Stomach (tissue), 19 donors: ENCODE measurements at regions of chr10 and their contacts with region 1.

Region 1: DNA sequence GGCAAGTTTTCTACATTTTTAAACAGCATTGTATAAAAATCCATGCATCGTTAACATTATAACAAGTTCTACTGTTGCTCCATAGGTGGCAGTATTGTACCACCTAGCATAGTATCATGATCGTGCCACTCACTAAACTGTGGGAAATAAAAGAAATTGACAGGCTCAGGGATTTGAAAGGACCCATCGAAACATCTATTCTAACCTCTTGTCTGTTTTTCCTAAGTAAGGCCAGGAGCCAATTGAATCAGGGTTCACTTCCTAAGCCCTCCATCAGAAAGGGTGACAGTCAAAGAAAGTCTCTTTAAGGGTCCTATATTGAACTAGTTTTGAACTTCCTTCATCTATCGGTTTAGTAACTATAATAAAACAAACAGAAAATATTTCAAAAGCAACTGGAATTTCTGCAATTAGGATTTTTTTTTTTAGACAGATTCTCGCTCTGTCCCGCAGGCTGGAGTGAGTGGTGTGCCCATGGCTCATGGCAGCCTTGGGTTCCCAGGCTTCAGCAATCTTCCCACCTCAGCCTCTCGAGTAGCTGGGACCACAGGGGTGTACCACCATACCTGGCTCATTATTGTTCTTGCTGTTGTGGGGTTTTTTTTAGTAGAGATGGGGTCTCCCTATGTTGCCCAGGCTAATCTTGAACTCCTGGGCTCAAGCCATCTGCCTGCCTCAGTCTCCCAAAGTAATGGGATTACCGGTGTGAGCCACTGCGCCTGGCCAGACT is 9.4 kb downstream of the HACD1 start:
- DNase-seq: peak in 1 of 2 donors; percentile 79
- H3K4me3 ChIP-seq: no peak overlapping the region
- H3K27ac ChIP-seq: no peak overlapping the region
- H3K4me1 ChIP-seq: peaks cover 0 to 17% (median 6%) of the 10 kb centered on the region in 4 donors
- H3K27me3 ChIP-seq: no peaks in the 10 kb centered on the region
- CTCF ChIP-seq: peak in 5 of 7 experiments; percentile 68 to 87 (median 85)
- EP300 ChIP-seq: no peak
- POLR2A ChIP-seq: no peak

Region 2: DNA sequence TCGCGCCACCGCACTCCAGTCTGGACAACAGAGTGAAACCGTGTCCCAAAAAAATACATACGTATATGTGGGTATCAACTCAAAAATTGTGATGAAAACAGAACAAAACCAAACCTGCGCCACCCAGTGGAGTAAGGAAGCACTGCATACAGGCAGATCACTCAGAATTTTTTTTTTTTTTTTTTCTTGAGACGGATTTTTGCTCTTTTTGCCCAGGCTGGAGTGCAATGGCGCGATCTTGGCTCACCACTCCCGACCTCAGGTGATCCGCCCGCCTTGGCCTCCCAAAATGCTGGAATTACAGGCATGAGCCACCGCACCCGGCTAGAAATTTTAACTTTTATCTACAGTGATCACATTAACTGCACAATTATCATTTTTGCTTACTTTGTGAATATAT is 135.2 kb after region 1 on chr10:
- intact Hi-C with region 1: loop called (anchors 5 kb)
- DNase-seq: peak; percentile 58 to 72
- H3K4me3 ChIP-seq: no peak overlapping the region
- H3K27ac ChIP-seq: no peak overlapping the region
- H3K4me1 ChIP-seq: peaks cover 0 to 16% (median 6%) of the 10 kb centered on the region in 4 donors
- H3K27me3 ChIP-seq: no peaks in the 10 kb centered on the region
- CTCF ChIP-seq: peak in 5 of 7 experiments; percentile 78 to 97 (median 86)
- EP300 ChIP-seq: no peak
- POLR2A ChIP-seq: no peak

Region 3: GRCh38 chr10:17872191-17873091 is 264.7 kb after region 1 on chr10:
- intact Hi-C with region 1: loop called (anchors 10 kb)
- DNase-seq: peak in 1 of 2 donors; percentile 47
- H3K4me3 ChIP-seq: no peak overlapping the region
- H3K27ac ChIP-seq: no peak overlapping the region
- H3K4me1 ChIP-seq: no peaks in the 10 kb centered on the region
- H3K27me3 ChIP-seq: no peaks in the 10 kb centered on the region
- CTCF ChIP-seq: peak in 3 of 7 experiments; percentile 22 to 59 (median 23)
- EP300 ChIP-seq: no peak
- POLR2A ChIP-seq: no peak

Region 4: GRCh38 chr10:17974505-17974904 is 366.7 kb after region 1 on chr10:
- intact Hi-C with region 1: no loop called
- DNase-seq: no peak
- H3K4me3 ChIP-seq: no peak overlapping the region
- H3K27ac ChIP-seq: no peak overlapping the region
- H3K4me1 ChIP-seq: no peaks in the 10 kb centered on the region
- H3K27me3 ChIP-seq: no peaks in the 10 kb centered on the region
- CTCF ChIP-seq: no peak
- EP300 ChIP-seq: no peak
- POLR2A ChIP-seq: no peak